ENCODE measurements at regions of chr14 and their contacts with region 1.

Region 1: GRCh38 chr14:20873370-20874177 is 17.6 kb upstream of the RNASE3 start:
- DNase-seq: peak; percentile 97
- H3K4me3 ChIP-seq: peak overlapping the region; percentile 30
- H3K27ac ChIP-seq: peak overlapping the region; percentile 25
- H3K4me1 ChIP-seq: peaks cover 4% of the 10 kb centered on the region
- H3K27me3 ChIP-seq: peaks cover 13% of the 10 kb centered on the region
- CTCF ChIP-seq: peak; percentile 98

Region 2: GRCh38 chr14:19974844-19975243 is 898.7 kb before region 1 on chr14:
- CTCF ChIA-PET with region 1: no interaction called
- POLR2A ChIA-PET with region 1: no interaction called
- intact Hi-C with region 1: no loop called
- DNase-seq: no peak
- H3K4me3 ChIP-seq: no peak overlapping the region
- H3K27ac ChIP-seq: no peak overlapping the region
- H3K4me1 ChIP-seq: no peaks in the 10 kb centered on the region
- H3K27me3 ChIP-seq: no peaks in the 10 kb centered on the region
- CTCF ChIP-seq: no peak

Region 3: DNA sequence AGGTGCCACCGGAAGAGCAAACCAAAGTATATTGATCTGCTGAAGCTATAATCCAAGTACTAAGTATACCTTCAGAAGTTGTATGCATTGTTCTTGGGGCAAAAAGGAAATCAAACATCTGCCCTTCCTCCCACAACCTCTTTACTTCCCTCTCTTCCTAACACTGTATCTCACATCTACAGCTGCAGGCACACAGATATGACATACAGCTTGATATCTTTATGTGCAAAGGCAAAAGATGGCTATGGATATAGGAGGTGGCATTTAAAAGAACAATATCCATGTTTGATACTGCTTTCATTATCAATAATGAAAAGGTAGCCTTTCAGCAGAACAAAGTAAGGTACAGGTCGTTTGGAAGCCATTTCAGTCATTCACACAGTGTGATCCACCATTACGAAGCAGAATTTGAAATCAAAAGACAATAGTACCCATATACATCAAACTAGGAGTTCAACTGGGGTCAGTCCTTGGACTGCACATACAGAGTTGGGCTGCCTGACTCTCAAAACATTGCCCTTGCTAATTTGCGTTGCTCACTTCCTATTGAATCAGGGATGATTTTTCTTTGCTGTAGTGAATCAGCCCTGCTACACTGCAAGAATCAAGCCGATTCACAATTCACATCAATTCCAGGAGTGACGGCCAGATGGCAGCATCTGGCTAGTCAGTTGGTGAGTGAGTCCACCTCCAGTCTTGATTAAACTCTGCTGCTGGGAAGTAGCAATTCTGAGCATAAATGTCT is 176.1 kb before region 1 on chr14:
- CTCF ChIA-PET with region 1: interaction called, 7 read pairs
- POLR2A ChIA-PET with region 1: no interaction called
- intact Hi-C with region 1: loop called (anchors 5 kb)
- DNase-seq: peak; percentile 77
- H3K4me3 ChIP-seq: no peak overlapping the region
- H3K27ac ChIP-seq: no peak overlapping the region
- H3K4me1 ChIP-seq: no peaks in the 10 kb centered on the region
- H3K27me3 ChIP-seq: no peaks in the 10 kb centered on the region
- CTCF ChIP-seq: peak; percentile 77

Region 4: GRCh38 chr14:20956376-20956976 is 82.9 kb after region 1 on chr14:
- CTCF ChIA-PET with region 1: interaction called, 14 read pairs
- POLR2A ChIA-PET with region 1: no interaction called
- intact Hi-C with region 1: no loop called
- DNase-seq: no peak
- H3K4me3 ChIP-seq: no peak overlapping the region
- H3K27ac ChIP-seq: no peak overlapping the region
- H3K4me1 ChIP-seq: peaks cover 2% of the 10 kb centered on the region
- H3K27me3 ChIP-seq: no peaks in the 10 kb centered on the region
- CTCF ChIP-seq: no peak

Region 5: GRCh38 chr14:21087294-21088091 is 213.9 kb after region 1 on chr14:
- CTCF ChIA-PET with region 1: no interaction called
- POLR2A ChIA-PET with region 1: no interaction called
- intact Hi-C with region 1: no loop called
- DNase-seq: peak; percentile 97
- H3K4me3 ChIP-seq: no peak overlapping the region
- H3K27ac ChIP-seq: no peak overlapping the region
- H3K4me1 ChIP-seq: peaks cover under 1% of the 10 kb centered on the region
- H3K27me3 ChIP-seq: no peaks in the 10 kb centered on the region
- CTCF ChIP-seq: no peak

Region 6: GRCh38 chr14:21589317-21589716 is 715.7 kb after region 1 on chr14:
- CTCF ChIA-PET with region 1: no interaction called
- POLR2A ChIA-PET with region 1: no interaction called
- intact Hi-C with region 1: no loop called
- DNase-seq: no peak
- H3K4me3 ChIP-seq: no peak overlapping the region
- H3K27ac ChIP-seq: no peak overlapping the region
- H3K4me1 ChIP-seq: no peaks in the 10 kb centered on the region
- H3K27me3 ChIP-seq: no peaks in the 10 kb centered on the region
- CTCF ChIP-seq: no peak